ENCODE measurements at regions of chr1 and their contacts with region 1.

Region 1: GRCh38 chr1:67832737-67833601 is at the start of gene GNG12:
- DNase-seq: peak; percentile 73 to 83 (median 80)
- H3K4me3 ChIP-seq: peak within 1 kb of the TSS; percentile 75
- H3K27ac ChIP-seq: peak within 1 kb of the TSS; percentile 65 to 72
- H3K4me1 ChIP-seq: peaks cover 6% of the 10 kb centered on the region
- H3K27me3 ChIP-seq: no peaks in the 10 kb centered on the region
- CTCF ChIP-seq: no peak
- EP300 ChIP-seq: no peak
- POLR2A ChIP-seq: peak; percentile 49
- total RNA-seq, gene GNG12: 50.6 to 84.4 (median 68.0) TPM

Region 2: DNA sequence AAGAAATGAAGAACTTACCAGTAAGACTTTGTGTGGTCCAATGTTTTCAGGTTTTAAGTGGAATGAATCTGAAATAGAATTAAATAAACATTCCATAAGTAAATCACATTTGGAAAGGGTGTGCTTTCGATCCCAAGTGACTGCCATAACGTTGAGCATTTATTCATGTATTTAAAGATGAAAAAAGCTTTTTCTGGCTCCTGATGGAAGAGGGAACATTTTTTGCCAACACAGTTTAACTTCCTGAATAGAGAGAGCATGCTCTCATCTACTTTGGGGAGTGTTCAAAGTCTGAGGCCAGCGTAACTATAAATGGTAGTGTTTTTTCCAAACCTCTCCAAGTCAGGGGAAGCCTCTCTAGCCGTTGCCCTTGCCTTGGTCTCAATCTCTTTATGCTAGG is 55.5 kb before region 1 on chr1:
- intact Hi-C with region 1: loop called in 1 of 4 experiments (anchors 5 kb)
- DNase-seq: no peak
- H3K4me3 ChIP-seq: no peak overlapping the region
- H3K27ac ChIP-seq: peak overlapping the region in 1 of 2 donors; percentile 67
- H3K4me1 ChIP-seq: peaks cover 10% of the 10 kb centered on the region
- H3K27me3 ChIP-seq: no peaks in the 10 kb centered on the region
- CTCF ChIP-seq: no peak
- EP300 ChIP-seq: no peak
- POLR2A ChIP-seq: no peak

Region 3: GRCh38 chr1:67791686-67792475 is 41.1 kb before region 1 on chr1:
- intact Hi-C with region 1: no loop called
- DNase-seq: peak in 3 of 5 donors; percentile 32 to 50 (median 36)
- H3K4me3 ChIP-seq: no peak overlapping the region
- H3K27ac ChIP-seq: peak overlapping the region in 1 of 2 donors; percentile 0
- H3K4me1 ChIP-seq: peaks cover 23% of the 10 kb centered on the region
- H3K27me3 ChIP-seq: no peaks in the 10 kb centered on the region
- CTCF ChIP-seq: no peak
- EP300 ChIP-seq: no peak
- POLR2A ChIP-seq: no peak

Region 4: GRCh38 chr1:67889953-67890567 is 57.1 kb after region 1 on chr1:
- intact Hi-C with region 1: no loop called
- DNase-seq: no peak
- H3K4me3 ChIP-seq: no peak overlapping the region
- H3K27ac ChIP-seq: no peak overlapping the region
- H3K4me1 ChIP-seq: no peaks in the 10 kb centered on the region
- H3K27me3 ChIP-seq: no peaks in the 10 kb centered on the region
- CTCF ChIP-seq: no peak
- EP300 ChIP-seq: no peak
- POLR2A ChIP-seq: no peak

Measured in ovary (tissue), 10 donors.